ENCODE measurements at regions of chr3 and their contacts with region 1.

Region 1: GRCh38 chr3:155701882-155702465 is 42.9 kb downstream of the PLCH1 start:
- DNase-seq: no peak
- H3K4me3 ChIP-seq: no peak overlapping the region
- H3K27ac ChIP-seq: no peak overlapping the region
- H3K4me1 ChIP-seq: peaks cover 0 to 8% (median 2%) of the 10 kb centered on the region in 4 experiments; a peak in 2 of 7 replicates
- H3K27me3 ChIP-seq: no peaks in the 10 kb centered on the region
- CTCF ChIP-seq: peak in 2 of 3 experiments; percentile 25 to 49; a peak in 2 of 4 replicates
- EP300 ChIP-seq: no peak
- POLR2A ChIP-seq: no peak
- RAD21 ChIP-seq: peak; percentile 64 to 83

Region 2: DNA sequence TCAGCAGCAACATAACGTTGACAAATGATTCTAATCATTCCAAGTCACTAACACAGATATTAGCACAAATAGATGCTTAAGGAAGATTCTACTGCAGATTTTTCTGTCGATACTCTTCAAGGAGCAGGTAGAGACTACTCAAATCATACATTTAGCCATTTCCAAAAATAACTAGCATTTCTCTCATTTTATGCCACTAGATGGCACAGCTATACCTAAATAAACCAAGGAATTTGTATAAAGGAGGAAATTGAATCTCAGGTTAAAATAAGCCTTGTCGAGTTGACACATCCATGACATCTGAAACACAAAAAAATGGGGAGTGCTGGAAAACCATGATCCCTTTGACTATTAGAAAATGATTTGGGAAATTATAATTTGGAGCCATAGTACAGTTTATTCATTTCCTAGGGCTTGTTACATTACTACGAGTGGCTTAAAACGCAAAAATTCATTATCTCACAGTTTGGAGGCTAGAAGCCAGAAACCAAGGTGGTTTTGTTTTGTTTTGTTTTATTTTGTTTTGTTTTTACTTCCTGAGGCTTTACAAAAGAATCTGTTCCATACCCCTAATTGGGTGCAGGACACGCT is 349.0 kb before region 1 on chr3:
- CTCF ChIA-PET with region 1: interaction called, 61 read pairs
- POLR2A ChIA-PET with region 1: no interaction called
- DNase-seq: no peak
- H3K4me3 ChIP-seq: no peak overlapping the region
- H3K27ac ChIP-seq: no peak overlapping the region
- H3K4me1 ChIP-seq: peaks cover 2 to 6% (median 4%) of the 10 kb centered on the region in 4 experiments; a peak in 6 of 7 replicates
- H3K27me3 ChIP-seq: no peaks in the 10 kb centered on the region
- CTCF ChIP-seq: peak in 2 of 3 experiments; percentile 33 to 44; a peak in 2 of 4 replicates
- EP300 ChIP-seq: no peak
- POLR2A ChIP-seq: no peak
- RAD21 ChIP-seq: peak; percentile 70 to 74

Region 3: GRCh38 chr3:155382396-155383042 is 319.5 kb before region 1 on chr3:
- CTCF ChIA-PET with region 1: interaction called, 59 read pairs
- POLR2A ChIA-PET with region 1: no interaction called
- DNase-seq: peak; percentile 72 to 87
- H3K4me3 ChIP-seq: no peak overlapping the region
- H3K27ac ChIP-seq: no peak overlapping the region
- H3K4me1 ChIP-seq: peaks cover 0 to 4% (median 3%) of the 10 kb centered on the region in 4 experiments; a peak in 3 of 7 replicates
- H3K27me3 ChIP-seq: no peaks in the 10 kb centered on the region
- CTCF ChIP-seq: peak; percentile 94 to 95 (median 94)
- EP300 ChIP-seq: no peak
- POLR2A ChIP-seq: no peak
- RAD21 ChIP-seq: peak; percentile 99 to 100

Region 4: DNA sequence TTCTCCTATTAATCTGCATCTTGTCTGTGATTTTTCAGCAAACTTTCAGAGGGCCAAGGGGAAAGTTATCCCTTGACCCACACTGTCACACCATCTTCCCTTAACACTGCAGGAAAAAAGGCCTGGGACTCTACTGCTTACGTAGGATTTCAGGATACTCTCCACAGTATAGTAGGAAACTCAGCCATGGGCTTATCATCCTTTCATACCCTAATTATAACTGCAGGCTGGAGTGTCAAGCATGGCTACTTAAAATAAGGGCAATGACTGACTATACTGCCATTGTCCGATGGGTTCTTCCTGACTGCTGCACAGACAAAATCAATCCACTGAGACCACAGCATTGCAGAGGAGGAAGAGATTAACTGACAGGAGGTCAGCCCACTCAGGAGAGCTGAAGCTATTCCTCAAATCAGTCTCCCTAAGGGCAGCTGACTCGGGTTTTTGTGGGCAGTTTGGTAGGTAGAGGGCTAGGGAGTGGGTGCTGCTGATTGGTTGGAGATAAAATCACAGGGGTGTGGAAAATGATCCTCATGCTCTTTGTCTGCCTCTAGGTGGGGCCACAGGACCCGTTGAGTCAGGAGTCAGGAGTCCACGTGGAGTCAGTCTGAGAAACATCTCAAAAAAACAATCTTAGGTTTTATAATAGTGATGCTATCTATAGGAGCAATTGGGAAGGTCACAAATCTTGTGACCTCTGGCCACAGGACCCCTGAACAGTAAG is 290.3 kb before region 1 on chr3:
- CTCF ChIA-PET with region 1: interaction called, 12 read pairs
- POLR2A ChIA-PET with region 1: no interaction called
- DNase-seq: no peak
- H3K4me3 ChIP-seq: no peak overlapping the region
- H3K27ac ChIP-seq: no peak overlapping the region
- H3K4me1 ChIP-seq: no peaks in the 10 kb centered on the region
- H3K27me3 ChIP-seq: no peaks in the 10 kb centered on the region
- CTCF ChIP-seq: peak in 2 of 3 experiments; percentile 16 to 39; a peak in 2 of 4 replicates
- EP300 ChIP-seq: no peak
- POLR2A ChIP-seq: no peak
- RAD21 ChIP-seq: peak; percentile 59 to 61

Region 5: DNA sequence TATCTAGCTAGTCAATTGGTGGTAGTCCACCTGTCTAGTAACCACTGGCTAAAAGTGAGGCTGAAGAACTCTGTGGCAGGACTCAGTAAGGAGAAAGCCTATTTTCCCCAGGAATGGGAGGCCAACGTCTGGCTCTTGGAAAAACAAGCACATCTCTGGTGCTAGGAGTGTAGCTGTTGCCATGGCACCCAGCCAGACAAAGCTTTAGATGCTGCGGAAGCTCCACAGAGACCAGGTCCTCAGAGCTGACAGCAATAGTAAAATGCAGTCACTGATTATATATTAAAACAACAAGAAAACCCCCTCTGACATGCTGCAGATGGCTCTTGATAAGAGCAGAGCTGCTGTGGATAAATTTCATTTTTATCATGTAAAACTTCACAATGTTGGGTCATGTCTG is 283.6 kb before region 1 on chr3:
- CTCF ChIA-PET with region 1: interaction called, 15 read pairs
- POLR2A ChIA-PET with region 1: no interaction called
- DNase-seq: no peak
- H3K4me3 ChIP-seq: no peak overlapping the region
- H3K27ac ChIP-seq: no peak overlapping the region
- H3K4me1 ChIP-seq: peaks cover 0 to 12% (median 8%) of the 10 kb centered on the region in 4 experiments; a peak in 4 of 7 replicates
- H3K27me3 ChIP-seq: no peaks in the 10 kb centered on the region
- CTCF ChIP-seq: no peak
- EP300 ChIP-seq: no peak
- POLR2A ChIP-seq: no peak
- RAD21 ChIP-seq: no peak

Region 6: DNA sequence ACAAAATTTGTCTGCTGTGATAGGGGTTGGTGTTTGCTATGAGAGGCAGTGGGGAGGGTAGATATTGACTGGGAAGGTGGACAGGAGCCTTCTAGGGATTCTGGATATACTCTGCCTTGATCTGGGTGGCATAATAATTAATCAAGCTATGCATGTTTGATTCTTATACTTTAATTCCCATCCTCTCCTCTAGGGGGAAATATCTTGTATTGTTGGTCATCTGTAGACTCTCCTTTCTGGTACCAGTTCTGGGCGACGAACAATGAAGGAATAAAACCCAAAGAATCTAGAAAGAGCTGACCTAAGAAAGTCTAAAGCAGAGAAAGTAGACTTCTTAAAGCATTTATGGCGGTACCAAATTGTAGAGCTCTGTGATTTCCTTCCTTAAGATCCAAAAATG is 210.3 kb before region 1 on chr3:
- CTCF ChIA-PET with region 1: interaction called, 10 read pairs
- POLR2A ChIA-PET with region 1: no interaction called
- DNase-seq: no peak
- H3K4me3 ChIP-seq: no peak overlapping the region
- H3K27ac ChIP-seq: no peak overlapping the region
- H3K4me1 ChIP-seq: no peaks in the 10 kb centered on the region
- H3K27me3 ChIP-seq: no peaks in the 10 kb centered on the region
- CTCF ChIP-seq: no peak
- EP300 ChIP-seq: no peak
- POLR2A ChIP-seq: no peak
- RAD21 ChIP-seq: no peak

Region 7: GRCh38 chr3:155712008-155712407 is 10.0 kb after region 1 on chr3:
- CTCF ChIA-PET with region 1: interaction called, 61 read pairs
- POLR2A ChIA-PET with region 1: no interaction called
- DNase-seq: no peak
- H3K4me3 ChIP-seq: no peak overlapping the region
- H3K27ac ChIP-seq: no peak overlapping the region
- H3K4me1 ChIP-seq: peaks cover 0 to 7% (median 1%) of the 10 kb centered on the region in 4 experiments; a peak in 4 of 7 replicates
- H3K27me3 ChIP-seq: no peaks in the 10 kb centered on the region
- CTCF ChIP-seq: no peak
- EP300 ChIP-seq: no peak
- POLR2A ChIP-seq: no peak
- RAD21 ChIP-seq: no peak

Region 8: GRCh38 chr3:156017352-156018030 is 315.5 kb after region 1 on chr3:
- CTCF ChIA-PET with region 1: no interaction called
- POLR2A ChIA-PET with region 1: no interaction called
- DNase-seq: no peak
- H3K4me3 ChIP-seq: no peak overlapping the region
- H3K27ac ChIP-seq: no peak overlapping the region
- H3K4me1 ChIP-seq: peaks cover 0 to 9% (median 0%) of the 10 kb centered on the region in 4 experiments; a peak in 1 of 7 replicates
- H3K27me3 ChIP-seq: no peaks in the 10 kb centered on the region
- CTCF ChIP-seq: no peak
- EP300 ChIP-seq: no peak
- POLR2A ChIP-seq: no peak
- RAD21 ChIP-seq: no peak